Heart right ventricle (tissue), 16 donors: ENCODE measurements at regions of chr11 and their contacts with region 1.

Region 1: GRCh38 chr11:46295312-46296058 is 18.0 kb downstream of the CREB3L1 start:
- DNase-seq: peak; percentile 78 to 83
- ATAC-seq: peak; percentile 90 to 93 (median 92)
- H3K4me3 ChIP-seq: peak overlapping the region; percentile 35 to 75 (median 56)
- H3K27ac ChIP-seq: peak overlapping the region in 9 of 10 donors; percentile 31 to 76 (median 50)
- H3K4me1 ChIP-seq: peaks cover 13 to 59% (median 44%) of the 10 kb centered on the region in 9 donors
- H3K27me3 ChIP-seq: peaks cover 0 to 30% (median 0%) of the 10 kb centered on the region in 7 donors
- CTCF ChIP-seq: no peak

Region 2: DNA sequence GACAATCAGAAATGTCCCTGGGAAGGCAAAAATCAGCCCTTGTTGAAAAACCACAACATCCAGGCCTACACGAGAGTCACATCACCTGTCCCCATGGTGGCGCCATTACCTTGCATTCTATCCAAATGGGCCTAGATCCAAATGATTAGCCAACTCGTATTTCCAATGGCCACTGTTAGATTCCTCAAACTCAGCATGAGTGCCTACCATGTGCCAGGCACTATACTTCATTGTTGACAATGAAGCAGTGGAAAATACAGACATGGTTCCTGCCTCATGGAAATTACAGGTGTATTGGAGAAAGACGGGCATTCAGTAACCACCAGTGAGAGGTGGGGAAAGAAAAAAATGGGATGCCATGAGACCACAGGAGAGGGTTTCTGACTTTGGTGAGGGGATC is 47.8 kb before region 1 on chr11:
- intact Hi-C with region 1: loop called in 2 of 10 experiments (anchors 2 to 5 kb)
- DNase-seq: peak in 1 of 2 donors; percentile 26
- ATAC-seq: no peak
- H3K4me3 ChIP-seq: no peak overlapping the region
- H3K27ac ChIP-seq: peak overlapping the region in 1 of 10 donors; percentile 50
- H3K4me1 ChIP-seq: peaks cover 3 to 24% (median 11%) of the 10 kb centered on the region in 9 donors
- H3K27me3 ChIP-seq: no peaks in the 10 kb centered on the region
- CTCF ChIP-seq: peak in 7 of 9 donors; percentile 17 to 53 (median 26)

Region 3: DNA sequence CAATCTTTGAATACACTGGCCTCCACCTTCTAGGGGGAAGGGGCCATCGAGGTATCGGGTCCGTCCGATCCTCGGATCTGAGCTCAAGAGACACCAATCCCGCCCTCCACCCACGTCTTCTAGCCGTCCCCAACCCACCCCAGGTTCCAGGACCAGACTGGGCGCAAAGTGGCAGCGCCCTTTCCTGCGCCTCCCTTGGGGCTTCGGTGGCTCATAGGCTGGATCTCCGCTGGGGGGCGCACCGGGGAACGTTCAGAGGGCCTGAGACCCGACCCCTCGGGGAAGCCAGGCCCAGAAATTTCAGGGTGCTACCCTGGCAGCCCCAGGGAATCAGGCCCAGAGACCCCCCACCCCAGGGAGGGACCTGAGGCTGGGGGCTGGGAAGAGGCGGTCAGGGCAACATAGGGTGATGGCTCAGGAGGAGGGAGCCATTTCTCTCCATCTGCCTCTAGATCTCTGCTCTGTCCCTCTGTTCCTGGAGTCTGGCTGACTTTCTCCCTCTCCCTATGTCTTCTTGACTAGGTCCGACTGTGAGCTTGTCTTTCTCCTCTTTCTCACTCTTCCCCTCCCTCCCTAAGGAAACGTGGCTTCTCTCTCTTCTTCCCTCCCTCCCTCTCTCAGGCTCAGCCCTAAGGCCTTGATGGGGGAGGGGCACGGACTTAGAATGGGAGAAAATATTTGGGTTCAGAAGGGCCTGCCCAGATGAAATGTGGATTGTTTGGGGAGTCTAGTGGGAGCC is 16.9 kb before region 1 on chr11:
- intact Hi-C with region 1: loop called in 2 of 10 experiments (anchors 2 kb)
- DNase-seq: peak; percentile 49 to 62
- ATAC-seq: peak; percentile 21 to 58 (median 45)
- H3K4me3 ChIP-seq: peak overlapping the region; percentile 55 to 78 (median 70)
- H3K27ac ChIP-seq: peak overlapping the region; percentile 70 to 93 (median 80)
- H3K4me1 ChIP-seq: peaks cover 29 to 84% (median 58%) of the 10 kb centered on the region in 9 donors
- H3K27me3 ChIP-seq: peaks cover 0 to 36% (median 0%) of the 10 kb centered on the region in 7 donors
- CTCF ChIP-seq: peak; percentile 27 to 69 (median 57)